ENCODE measurements at regions of chr2 and their contacts with region 1.

Region 1: GRCh38 chr2:73828818-73829570 is at the start of gene STAMBP:
- DNase-seq: peak; percentile 95
- H3K4me3 Mint-ChIP-seq: peak within 1 kb of the TSS; percentile 96
- H3K27ac Mint-ChIP-seq: peak within 1 kb of the TSS; percentile 91
- H3K4me1 Mint-ChIP-seq: peaks cover 53% of the 10 kb centered on the region
- H3K27me3 Mint-ChIP-seq: no peaks in the 10 kb centered on the region
- total RNA-seq, gene STAMBP: 79.9 to 85.3 TPM

Region 2: GRCh38 chr2:73886357-73886756 is 57.4 kb after region 1 on chr2:
- CTCF ChIA-PET with region 1: no interaction called
- POLR2A ChIA-PET with region 1: no interaction called
- intact Hi-C with region 1: loop called (anchors 1 kb)
- DNase-seq: peak; percentile 67
- H3K4me3 Mint-ChIP-seq: no peak overlapping the region
- H3K27ac Mint-ChIP-seq: no peak overlapping the region
- H3K4me1 Mint-ChIP-seq: peaks cover 18% of the 10 kb centered on the region
- H3K27me3 Mint-ChIP-seq: peaks cover 3% of the 10 kb centered on the region

Region 3: GRCh38 chr2:73939419-73939818 is 110.4 kb after region 1 on chr2:
- CTCF ChIA-PET with region 1: interaction called, 6 read pairs
- POLR2A ChIA-PET with region 1: interaction called, 3 read pairs
- intact Hi-C with region 1: loop called (anchors 1 kb)
- DNase-seq: peak; percentile 56
- H3K4me3 Mint-ChIP-seq: no peak overlapping the region
- H3K27ac Mint-ChIP-seq: peak overlapping the region; percentile 73
- H3K4me1 Mint-ChIP-seq: peaks cover 85% of the 10 kb centered on the region
- H3K27me3 Mint-ChIP-seq: no peaks in the 10 kb centered on the region

Region 4: GRCh38 chr2:74119912-74120825 is 291.2 kb after region 1 on chr2:
- CTCF ChIA-PET with region 1: interaction called, 15 read pairs
- POLR2A ChIA-PET with region 1: no interaction called
- intact Hi-C with region 1: no loop called
- DNase-seq: peak; percentile 91
- H3K4me3 Mint-ChIP-seq: peak overlapping the region; percentile 84
- H3K27ac Mint-ChIP-seq: peak overlapping the region; percentile 88
- H3K4me1 Mint-ChIP-seq: peaks cover 8% of the 10 kb centered on the region
- H3K27me3 Mint-ChIP-seq: no peaks in the 10 kb centered on the region

Region 5: DNA sequence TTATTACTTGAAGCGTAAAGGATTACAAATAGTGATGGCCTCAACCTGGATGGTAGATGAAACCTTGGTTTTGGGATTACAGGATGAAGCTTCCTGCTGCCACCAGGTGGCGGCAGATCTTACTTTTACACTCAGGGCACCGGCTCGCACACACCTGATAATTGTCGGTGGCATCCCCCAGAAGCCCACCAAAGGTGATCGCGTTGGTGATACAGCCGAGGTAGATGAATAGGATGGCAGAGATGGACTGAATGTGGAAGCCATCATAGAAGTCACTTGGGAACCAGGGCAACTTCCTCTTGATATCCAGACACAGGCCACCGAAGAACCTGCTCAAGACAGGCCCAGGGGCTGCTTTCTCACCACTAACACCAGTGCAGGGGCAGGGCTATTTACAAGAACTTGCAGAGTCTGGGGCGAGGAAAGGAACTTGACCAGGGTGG is 421.2 kb after region 1 on chr2:
- CTCF ChIA-PET with region 1: interaction called, 11 read pairs
- POLR2A ChIA-PET with region 1: no interaction called
- intact Hi-C with region 1: no loop called
- DNase-seq: peak; percentile 67
- H3K4me3 Mint-ChIP-seq: no peak overlapping the region
- H3K27ac Mint-ChIP-seq: no peak overlapping the region
- H3K4me1 Mint-ChIP-seq: no peaks in the 10 kb centered on the region
- H3K27me3 Mint-ChIP-seq: no peaks in the 10 kb centered on the region